Panc1 (cell line): ENCODE measurements at regions of chr13 and their contacts with region 1.

Region 1: DNA sequence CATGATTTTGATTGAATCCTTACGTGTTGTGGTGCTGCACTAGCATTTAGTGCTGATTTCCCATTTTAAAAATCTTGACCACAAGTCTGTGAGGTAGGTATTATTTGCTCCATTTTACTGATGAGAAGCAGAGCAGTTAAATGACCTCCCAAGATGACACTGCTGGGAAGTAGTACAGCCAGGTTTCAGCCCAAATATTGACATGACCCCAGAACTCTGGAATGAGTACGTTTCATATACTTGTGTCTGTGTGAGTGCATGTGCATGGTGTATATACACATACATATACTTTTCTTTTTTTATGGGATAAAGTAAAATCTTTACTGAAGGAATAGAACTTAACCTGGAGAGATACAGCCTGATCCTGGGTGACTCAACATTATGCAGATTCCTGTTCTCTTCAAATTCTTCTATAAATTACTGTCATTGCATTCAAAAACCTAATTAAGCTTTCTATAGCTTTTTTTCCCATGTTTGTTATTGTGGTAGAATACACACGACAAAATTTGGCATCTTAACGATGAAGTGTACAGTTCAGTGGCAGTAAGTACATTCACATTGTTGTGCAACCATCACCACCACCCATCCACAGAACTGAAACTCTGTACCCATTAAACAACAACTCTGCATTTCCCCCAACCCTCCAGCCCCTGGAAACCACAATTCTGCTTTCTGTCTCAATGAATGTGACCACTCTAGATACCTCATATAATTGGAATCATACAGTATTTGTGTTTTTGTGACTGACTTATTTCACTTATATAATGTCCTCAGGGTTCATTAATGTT is 311.9 kb downstream of the MTUS2 start:
- DNase-seq: no peak
- ATAC-seq: no peak
- H3K4me3 ChIP-seq: no peak overlapping the region
- H3K27ac ChIP-seq: no peak overlapping the region
- H3K4me1 ChIP-seq: no peaks in the 10 kb centered on the region
- H3K27me3 ChIP-seq: no peaks in the 10 kb centered on the region
- CTCF ChIP-seq: no peak

Region 2: GRCh38 chr13:28138756-28139470 is 993.2 kb before region 1 on chr13:
- CTCF ChIA-PET with region 1: no interaction called
- POLR2A ChIA-PET with region 1: interaction called, 14 read pairs
- in situ Hi-C with region 1: no loop called
- intact Hi-C with region 1: no loop called
- DNase-seq: no peak
- ATAC-seq: peak; percentile 81
- H3K4me3 ChIP-seq: peak overlapping the region; percentile 72 to 85
- H3K27ac ChIP-seq: peak overlapping the region; percentile 81
- H3K4me1 ChIP-seq: peaks cover 10% of the 10 kb centered on the region
- H3K27me3 ChIP-seq: no peaks in the 10 kb centered on the region
- CTCF ChIP-seq: no peak